Ovary (tissue), 10 donors: ENCODE measurements at regions of chr13 and their contacts with region 1.

Region 1: GRCh38 chr13:49996951-49997895 is at the start of gene TRIM13:
- DNase-seq: peak; percentile 88 to 93 (median 91)
- H3K4me3 ChIP-seq: peak within 1 kb of the TSS; percentile 90
- H3K27ac ChIP-seq: peak within 1 kb of the TSS; percentile 97 to 98
- H3K4me1 ChIP-seq: peaks cover 3% of the 10 kb centered on the region
- H3K27me3 ChIP-seq: no peaks in the 10 kb centered on the region
- CTCF ChIP-seq: peak; percentile 50 to 71 (median 58)
- EP300 ChIP-seq: no peak
- POLR2A ChIP-seq: peak; percentile 53
- total RNA-seq, gene TRIM13: 14.5 to 27.9 (median 25.5) TPM

Region 2: DNA sequence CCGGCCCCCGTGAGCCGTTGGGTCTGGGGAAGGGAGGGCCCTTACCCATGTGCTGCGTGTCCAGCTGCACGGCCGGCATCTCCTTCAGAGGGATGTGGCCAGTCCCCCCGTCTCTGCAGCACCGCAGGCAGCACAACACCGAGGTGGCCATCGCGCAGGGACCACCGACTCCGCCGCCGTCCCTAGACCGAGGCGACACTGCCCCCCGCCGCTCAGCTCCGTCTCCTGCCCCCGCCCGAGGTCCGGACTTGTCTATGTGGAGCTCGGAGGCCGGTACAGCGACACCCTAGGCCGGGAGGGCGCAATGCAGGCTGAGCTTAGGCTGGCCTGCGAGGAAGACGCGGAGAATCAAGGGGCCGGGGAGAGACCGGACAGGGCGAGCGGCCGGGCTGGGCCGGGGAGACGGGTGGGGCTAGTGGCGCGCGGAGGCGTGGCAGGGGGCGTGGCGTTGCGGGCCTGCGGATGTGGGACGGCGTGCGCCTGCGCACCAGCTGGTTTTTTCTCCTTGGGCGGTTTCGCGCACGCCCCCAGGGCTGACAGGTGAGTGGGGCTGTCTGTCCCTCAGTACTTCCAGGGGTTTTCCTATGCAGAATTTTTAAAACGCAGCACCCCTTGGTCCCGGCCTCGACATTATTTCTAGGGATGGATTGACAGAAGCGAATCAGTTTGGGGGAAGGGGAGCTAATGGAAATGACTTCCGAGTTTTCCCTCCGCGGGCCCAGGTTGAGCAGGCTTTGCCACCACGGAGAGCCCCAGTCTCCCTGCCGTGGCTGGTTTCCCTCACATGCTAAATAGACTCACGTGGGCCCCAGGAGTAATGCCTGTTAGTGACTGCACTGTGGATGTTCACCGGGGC is 60.9 kb before region 1 on chr13 and contains the start of gene SPRYD7:
- intact Hi-C with region 1: loop called in 1 of 4 experiments (anchors 10 kb)
- DNase-seq: peak; percentile 97 to 99 (median 98)
- H3K4me3 ChIP-seq: peak within 1 kb of the TSS; percentile 94
- H3K27ac ChIP-seq: peak within 1 kb of the TSS; percentile 42 to 69
- H3K4me1 ChIP-seq: peaks cover 9% of the 10 kb centered on the region
- H3K27me3 ChIP-seq: no peaks in the 10 kb centered on the region
- CTCF ChIP-seq: peak; percentile 88 to 98 (median 97)
- EP300 ChIP-seq: no peak
- POLR2A ChIP-seq: peak; percentile 33
- total RNA-seq, gene SPRYD7: 3.7 to 7.4 (median 6.8) TPM

Region 3: GRCh38 chr13:50123862-50124536 is 126.8 kb after region 1 on chr13:
- intact Hi-C with region 1: loop called in 2 of 4 experiments (anchors 2 to 5 kb)
- DNase-seq: peak in 1 of 5 donors; percentile 80
- H3K4me3 ChIP-seq: peak overlapping the region; percentile 83
- H3K27ac ChIP-seq: peak overlapping the region; percentile 70 to 97
- H3K4me1 ChIP-seq: peaks cover 2% of the 10 kb centered on the region
- H3K27me3 ChIP-seq: peaks cover 4% of the 10 kb centered on the region
- CTCF ChIP-seq: peak in 2 of 3 donors; percentile 11 to 24
- EP300 ChIP-seq: peak; percentile 34
- POLR2A ChIP-seq: peak; percentile 82

Region 4: GRCh38 chr13:51125498-51126226 is 1128.4 kb after region 1 on chr13:
- intact Hi-C with region 1: no loop called
- DNase-seq: peak in 2 of 5 donors; percentile 26 to 44
- H3K4me3 ChIP-seq: no peak overlapping the region
- H3K27ac ChIP-seq: no peak overlapping the region
- H3K4me1 ChIP-seq: no peaks in the 10 kb centered on the region
- H3K27me3 ChIP-seq: no peaks in the 10 kb centered on the region
- CTCF ChIP-seq: peak in 1 of 3 donors; percentile 13
- EP300 ChIP-seq: no peak
- POLR2A ChIP-seq: no peak